ENCODE measurements at regions of chr2 and their contacts with region 1.

Region 1: GRCh38 chr2:99489761-99490622 is at the start of gene REV1:
- DNase-seq: peak; percentile 98
- total RNA-seq, gene REV1: 30.7 to 34.3 TPM

Region 2: DNA sequence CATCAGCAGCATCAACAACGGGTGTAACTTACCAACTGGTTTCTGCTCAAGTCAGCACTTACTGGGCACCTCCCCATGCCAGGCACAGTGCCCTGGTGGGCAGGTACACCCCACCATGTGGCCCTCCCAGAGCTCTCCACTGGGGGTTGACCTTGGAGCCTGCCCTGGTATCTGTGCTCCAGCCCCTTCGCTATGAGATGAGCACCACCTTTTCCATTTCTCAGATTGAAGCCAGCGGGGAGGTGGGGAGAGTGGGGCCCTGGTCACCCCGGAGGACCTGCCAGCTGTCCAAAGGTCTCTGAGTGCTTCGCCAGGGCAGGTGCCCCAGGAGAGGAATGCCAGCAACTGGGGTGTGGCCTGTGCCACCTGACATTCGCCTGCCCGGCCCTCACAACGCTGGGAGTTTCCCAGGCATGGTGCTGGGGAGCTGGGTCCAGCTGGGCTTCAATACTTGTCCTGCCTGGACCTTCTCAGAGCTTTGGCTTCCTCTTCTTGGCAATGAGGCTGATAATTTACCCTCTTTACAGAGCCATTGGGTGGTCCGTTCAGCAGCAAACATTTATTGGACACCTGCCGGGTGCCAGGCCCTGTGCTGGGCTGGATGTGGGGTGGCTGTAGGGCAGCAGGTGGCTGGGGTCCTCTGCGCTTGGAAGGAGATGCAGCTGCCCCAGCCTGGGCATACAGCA is 1782.5 kb before region 1 on chr2:
- intact Hi-C with region 1: loop called in 1 of 2 experiments (anchors 5 kb)
- DNase-seq: peak; percentile 77

Region 3: DNA sequence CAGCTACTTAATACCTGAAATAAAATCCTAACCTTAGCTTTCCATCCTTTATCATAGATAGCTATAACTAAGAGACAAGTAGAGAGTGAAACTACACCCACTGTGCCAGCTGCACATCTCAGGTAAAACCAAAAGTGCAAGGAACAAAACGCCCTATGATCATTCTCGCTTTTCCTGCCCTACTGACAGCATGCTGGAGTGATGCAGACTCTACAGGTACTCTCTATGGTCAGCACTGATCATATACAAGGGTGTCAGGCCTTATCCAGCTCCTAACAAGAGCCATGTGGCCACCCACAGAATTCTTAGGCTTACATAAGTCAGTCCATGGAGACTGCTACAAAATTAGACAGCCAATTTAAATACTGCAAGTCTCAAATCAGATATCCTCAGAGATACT is 45.8 kb before region 1 on chr2:
- intact Hi-C with region 1: loop called in 1 of 2 experiments (anchors 2 kb)
- DNase-seq: no peak